Caco-2 (cell line): ENCODE measurements at regions of chr12 and their contacts with region 1.

Region 1: GRCh38 chr12:64403707-64404469 is at the start of gene XPOT:
- DNase-seq: peak; percentile 96
- H3K4me3 ChIP-seq: peak within 1 kb of the TSS; percentile 95
- H3K4me3 Mint-ChIP-seq: peak within 1 kb of the TSS; percentile 91
- H3K27ac Mint-ChIP-seq: peak within 1 kb of the TSS; percentile 99
- H3K4me1 ChIP-seq: no peaks in the 10 kb centered on the region
- H3K4me1 Mint-ChIP-seq: peaks cover 7% of the 10 kb centered on the region
- H3K27me3 ChIP-seq: no peaks in the 10 kb centered on the region
- H3K27me3 Mint-ChIP-seq: no peaks in the 10 kb centered on the region
- CTCF ChIP-seq: no peak
- total RNA-seq, gene XPOT: 164 and 174 TPM in 2 replicates

Region 2: DNA sequence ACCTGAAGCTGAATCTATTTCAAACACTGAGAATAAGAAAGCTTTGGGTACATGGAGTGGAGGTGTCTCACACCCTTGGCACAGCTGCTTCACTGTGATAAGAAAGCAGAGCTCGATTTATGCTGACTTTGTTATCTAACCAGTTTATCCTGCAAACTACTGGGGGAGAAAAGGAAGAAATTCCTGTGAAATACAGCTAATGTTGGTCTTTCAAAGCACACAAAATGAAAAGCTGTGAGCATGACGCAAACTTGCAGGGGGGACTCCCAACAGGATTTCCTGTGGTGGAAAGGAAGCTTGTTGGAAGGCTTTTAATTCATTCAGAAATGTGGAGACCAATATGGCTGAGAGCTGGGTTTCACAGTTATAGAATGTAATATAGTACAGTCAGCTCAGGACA is 506.0 kb before region 1 on chr12:
- CTCF ChIA-PET with region 1: no interaction called
- POLR2A ChIA-PET with region 1: no interaction called
- intact Hi-C with region 1: no loop called
- DNase-seq: no peak
- H3K4me3 ChIP-seq: no peak overlapping the region
- H3K4me3 Mint-ChIP-seq: no peak overlapping the region
- H3K27ac Mint-ChIP-seq: no peak overlapping the region
- H3K4me1 ChIP-seq: peaks cover 16% of the 10 kb centered on the region
- H3K4me1 Mint-ChIP-seq: peaks cover 14% of the 10 kb centered on the region
- H3K27me3 ChIP-seq: no peaks in the 10 kb centered on the region
- H3K27me3 Mint-ChIP-seq: no peaks in the 10 kb centered on the region
- CTCF ChIP-seq: no peak

Region 3: GRCh38 chr12:64273527-64274403 is 130.1 kb before region 1 on chr12:
- CTCF ChIA-PET with region 1: no interaction called
- POLR2A ChIA-PET with region 1: no interaction called
- intact Hi-C with region 1: loop called (anchors 1 kb)
- DNase-seq: peak in 1 of 2 experiments; percentile 30
- H3K4me3 ChIP-seq: no peak overlapping the region
- H3K4me3 Mint-ChIP-seq: no peak overlapping the region
- H3K27ac Mint-ChIP-seq: no peak overlapping the region
- H3K4me1 ChIP-seq: no peaks in the 10 kb centered on the region
- H3K4me1 Mint-ChIP-seq: no peaks in the 10 kb centered on the region
- H3K27me3 ChIP-seq: no peaks in the 10 kb centered on the region
- H3K27me3 Mint-ChIP-seq: no peaks in the 10 kb centered on the region
- CTCF ChIP-seq: peak; percentile 30 to 41

Region 4: DNA sequence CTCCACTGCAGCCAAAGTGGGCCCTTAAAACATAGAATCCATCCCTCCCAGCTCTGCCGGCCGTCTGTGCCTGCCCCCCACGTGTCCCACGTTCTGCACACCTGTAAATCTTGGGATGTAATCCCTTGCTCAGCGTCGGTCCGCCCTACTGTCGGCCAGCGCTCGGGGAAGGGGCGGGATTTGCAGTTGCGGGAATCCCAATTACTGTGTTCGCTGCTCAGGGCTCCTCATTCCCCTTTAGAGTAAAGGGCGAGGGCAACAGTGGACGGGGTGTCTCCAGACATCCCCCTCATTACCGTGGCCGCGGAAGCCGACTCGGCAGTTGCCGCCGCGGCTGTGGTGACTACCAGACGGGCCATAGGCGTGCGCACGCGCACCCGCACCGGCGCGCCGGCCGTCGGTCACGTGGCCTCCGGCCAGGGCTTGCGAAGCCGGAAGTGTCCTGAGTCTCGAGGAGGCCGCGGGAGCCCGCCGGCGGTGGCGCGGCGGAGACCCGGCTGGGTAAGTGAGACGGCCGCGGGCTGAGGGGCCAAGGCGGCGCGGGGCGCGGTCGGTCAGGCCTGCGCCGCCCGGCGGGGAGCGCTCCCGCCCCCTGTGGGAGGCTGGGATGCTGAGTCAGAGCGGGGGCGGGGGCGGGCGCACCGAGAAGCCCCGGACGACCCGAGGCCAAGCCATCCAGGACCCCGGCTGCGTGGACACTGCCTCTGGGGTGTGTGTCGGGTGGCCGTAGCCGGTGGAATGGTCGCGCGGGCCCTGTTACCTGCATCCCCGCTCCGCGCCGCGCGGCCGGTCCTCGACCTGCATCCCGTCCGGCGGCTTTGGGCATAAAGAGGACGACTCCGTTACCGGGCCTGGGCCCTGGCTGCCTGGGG is 48.0 kb after region 1 on chr12 and contains the start of gene TBK1:
- CTCF ChIA-PET with region 1: no interaction called
- POLR2A ChIA-PET with region 1: interaction called, 5 read pairs
- intact Hi-C with region 1: loop called (anchors 5 kb)
- DNase-seq: peak; percentile 91 to 94
- H3K4me3 ChIP-seq: peak within 1 kb of the TSS; percentile 98
- H3K4me3 Mint-ChIP-seq: peak within 1 kb of the TSS; percentile 83
- H3K27ac Mint-ChIP-seq: peak within 1 kb of the TSS; percentile 86
- H3K4me1 ChIP-seq: peaks cover 4% of the 10 kb centered on the region; the same call in 1 of the 2 replicates
- H3K4me1 Mint-ChIP-seq: peaks cover 15% of the 10 kb centered on the region
- H3K27me3 ChIP-seq: no peaks in the 10 kb centered on the region
- H3K27me3 Mint-ChIP-seq: no peaks in the 10 kb centered on the region
- CTCF ChIP-seq: no peak
- total RNA-seq, gene TBK1: 21.6 and 23.2 TPM in 2 replicates